Posterior vena cava (tissue), 2 donors: ENCODE measurements at regions of chr2 and their contacts with region 1.

Region 1: GRCh38 chr2:60948926-60949579 is 67.7 kb downstream of the REL start:
- DNase-seq: no peak

Region 2: DNA sequence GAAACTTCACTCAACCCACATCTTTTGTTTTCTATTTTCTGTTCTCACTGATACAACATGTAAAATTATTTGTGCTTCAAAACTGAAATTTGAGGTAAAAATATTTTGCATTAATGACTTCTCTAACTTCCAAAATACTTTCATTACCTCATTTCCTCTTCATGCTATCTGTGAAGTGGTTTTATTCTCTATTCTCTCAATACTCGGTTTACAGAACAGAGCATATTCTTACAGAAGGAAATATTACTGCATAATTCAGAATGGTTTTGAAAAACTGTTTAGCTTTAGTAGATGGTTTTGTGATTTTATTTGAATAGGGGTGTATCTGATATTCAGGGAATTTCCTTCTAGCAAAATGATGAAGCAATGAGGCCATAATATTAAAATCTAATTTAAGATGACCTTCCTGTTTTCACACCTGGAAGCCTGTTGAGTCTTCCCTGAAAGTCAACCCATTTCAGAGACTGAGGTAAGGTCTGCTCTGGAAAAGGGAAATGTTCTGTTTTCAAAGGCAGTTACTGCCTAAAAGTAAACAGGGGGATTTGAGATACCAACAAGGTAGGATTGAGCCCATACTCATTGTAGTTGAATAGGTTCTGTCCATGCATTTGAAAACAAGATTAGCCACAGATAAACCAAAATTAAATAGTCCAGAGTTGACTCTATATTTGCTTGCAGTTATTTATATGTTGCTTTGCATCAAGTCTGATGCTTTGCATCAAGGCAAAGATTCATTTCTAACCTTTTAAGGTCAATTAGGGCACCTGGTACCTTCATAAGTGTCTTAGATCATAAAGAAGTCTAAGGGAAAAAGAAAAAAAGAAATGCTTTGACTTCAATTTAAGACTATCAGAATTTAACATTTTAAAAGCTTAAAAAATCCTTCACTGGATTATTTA is 17.7 kb after region 1 on chr2:
- intact Hi-C with region 1: loop called in 1 of 2 experiments (anchors 1 kb)
- DNase-seq: no peak

Region 3: DNA sequence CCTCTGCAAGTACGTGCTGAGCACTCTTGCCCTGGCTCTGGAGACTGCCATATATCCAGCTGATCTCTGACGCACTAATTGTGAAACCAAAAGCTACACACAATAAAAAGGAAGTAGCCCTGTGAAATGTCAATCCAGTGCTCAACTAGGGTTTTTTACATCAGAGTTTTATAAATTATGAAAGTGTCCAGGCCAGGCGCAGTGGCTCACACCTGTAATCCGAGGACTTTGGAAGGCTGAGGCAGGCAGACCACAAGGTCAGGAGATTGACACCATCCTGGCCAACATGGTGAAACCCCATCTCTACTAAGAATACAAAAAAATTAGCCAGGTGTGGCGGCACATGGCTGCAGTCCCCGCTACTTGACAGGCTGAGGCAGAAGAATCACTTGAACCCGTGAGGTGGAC is 43.9 kb after region 1 on chr2:
- intact Hi-C with region 1: no loop called
- DNase-seq: no peak